Caco-2 (cell line): ENCODE measurements at regions of chr13 and their contacts with region 1.

Region 1: GRCh38 chr13:65638572-65639168 is 1591.5 kb downstream of the PCDH9 start:
- DNase-seq: peak in 1 of 2 experiments; percentile 42
- H3K4me3 ChIP-seq: no peak overlapping the region
- H3K4me3 Mint-ChIP-seq: no peak overlapping the region
- H3K27ac Mint-ChIP-seq: no peak overlapping the region
- H3K4me1 ChIP-seq: peaks cover 2% of the 10 kb centered on the region; the same call in 1 of the 2 replicates
- H3K4me1 Mint-ChIP-seq: no peaks in the 10 kb centered on the region
- H3K27me3 ChIP-seq: no peaks in the 10 kb centered on the region
- H3K27me3 Mint-ChIP-seq: no peaks in the 10 kb centered on the region
- CTCF ChIP-seq: peak; percentile 70 to 77

Region 2: DNA sequence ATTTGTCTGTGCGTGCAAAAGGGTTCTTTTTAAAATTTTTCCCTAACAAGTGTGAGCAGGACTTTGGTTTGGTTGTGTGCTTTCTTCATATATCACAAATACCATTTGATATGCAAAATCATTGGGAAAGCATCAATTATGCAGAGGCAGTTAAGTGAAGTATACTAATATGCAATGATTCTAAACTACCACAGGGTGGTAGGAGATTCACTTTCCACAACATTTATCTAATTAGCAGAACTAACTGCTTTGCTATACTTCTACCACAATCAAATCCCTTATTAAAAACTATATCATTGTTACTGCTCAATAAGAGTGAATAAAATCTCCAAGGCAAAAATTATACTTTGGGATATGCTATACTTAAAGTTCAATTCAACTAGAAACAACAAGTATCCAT is 1484.2 kb before region 1 on chr13:
- CTCF ChIA-PET with region 1: no interaction called
- POLR2A ChIA-PET with region 1: no interaction called
- intact Hi-C with region 1: loop called (anchors 10 kb)
- DNase-seq: peak in 1 of 2 experiments; percentile 4
- H3K4me3 ChIP-seq: no peak overlapping the region
- H3K4me3 Mint-ChIP-seq: no peak overlapping the region
- H3K27ac Mint-ChIP-seq: no peak overlapping the region
- H3K4me1 ChIP-seq: no peaks in the 10 kb centered on the region
- H3K4me1 Mint-ChIP-seq: no peaks in the 10 kb centered on the region
- H3K27me3 ChIP-seq: no peaks in the 10 kb centered on the region
- H3K27me3 Mint-ChIP-seq: no peaks in the 10 kb centered on the region
- CTCF ChIP-seq: peak; percentile 14 to 43

Region 3: DNA sequence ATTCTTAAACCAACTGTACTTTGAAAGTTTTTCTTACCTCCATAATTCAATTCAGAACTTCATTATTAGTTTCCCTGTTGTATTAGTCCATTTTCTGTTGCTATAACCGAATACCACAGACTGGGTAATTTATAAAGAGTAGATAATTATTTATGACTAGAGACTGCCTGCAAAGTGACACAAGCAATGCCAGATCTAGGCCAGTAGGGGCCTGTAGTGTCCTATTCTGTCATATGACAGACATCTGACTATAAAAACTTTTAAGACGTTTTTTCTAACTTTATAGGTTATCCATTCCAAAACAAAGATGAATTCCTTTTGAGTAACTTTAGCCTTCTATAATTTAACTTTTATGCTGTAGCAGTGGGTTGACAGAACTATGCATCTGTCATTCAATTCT is 1192.3 kb before region 1 on chr13:
- CTCF ChIA-PET with region 1: no interaction called
- POLR2A ChIA-PET with region 1: no interaction called
- intact Hi-C with region 1: loop called (anchors 1 kb)
- DNase-seq: peak in 1 of 2 experiments; percentile 24
- H3K4me3 ChIP-seq: no peak overlapping the region
- H3K4me3 Mint-ChIP-seq: no peak overlapping the region
- H3K27ac Mint-ChIP-seq: no peak overlapping the region
- H3K4me1 ChIP-seq: no peaks in the 10 kb centered on the region
- H3K4me1 Mint-ChIP-seq: no peaks in the 10 kb centered on the region
- H3K27me3 ChIP-seq: no peaks in the 10 kb centered on the region
- H3K27me3 Mint-ChIP-seq: no peaks in the 10 kb centered on the region
- CTCF ChIP-seq: peak; percentile 65 to 76

Region 4: GRCh38 chr13:64993514-64994164 is 645.0 kb before region 1 on chr13:
- CTCF ChIA-PET with region 1: no interaction called
- POLR2A ChIA-PET with region 1: no interaction called
- intact Hi-C with region 1: loop called (anchors 5 kb)
- DNase-seq: no peak
- H3K4me3 ChIP-seq: no peak overlapping the region
- H3K4me3 Mint-ChIP-seq: no peak overlapping the region
- H3K27ac Mint-ChIP-seq: peak overlapping the region; percentile 5
- H3K4me1 ChIP-seq: no peaks in the 10 kb centered on the region
- H3K4me1 Mint-ChIP-seq: no peaks in the 10 kb centered on the region
- H3K27me3 ChIP-seq: no peaks in the 10 kb centered on the region
- H3K27me3 Mint-ChIP-seq: no peaks in the 10 kb centered on the region
- CTCF ChIP-seq: no peak

Region 5: GRCh38 chr13:66234159-66234558 is 595.5 kb after region 1 on chr13:
- CTCF ChIA-PET with region 1: no interaction called
- POLR2A ChIA-PET with region 1: no interaction called
- intact Hi-C with region 1: no loop called
- DNase-seq: no peak
- H3K4me3 ChIP-seq: no peak overlapping the region
- H3K4me3 Mint-ChIP-seq: no peak overlapping the region
- H3K27ac Mint-ChIP-seq: no peak overlapping the region
- H3K4me1 ChIP-seq: no peaks in the 10 kb centered on the region
- H3K4me1 Mint-ChIP-seq: no peaks in the 10 kb centered on the region
- H3K27me3 ChIP-seq: no peaks in the 10 kb centered on the region
- H3K27me3 Mint-ChIP-seq: peaks cover 8% of the 10 kb centered on the region
- CTCF ChIP-seq: no peak